Prostate gland (tissue), 2 donors: ENCODE measurements at regions of chr4 and their contacts with region 1.

Region 1: DNA sequence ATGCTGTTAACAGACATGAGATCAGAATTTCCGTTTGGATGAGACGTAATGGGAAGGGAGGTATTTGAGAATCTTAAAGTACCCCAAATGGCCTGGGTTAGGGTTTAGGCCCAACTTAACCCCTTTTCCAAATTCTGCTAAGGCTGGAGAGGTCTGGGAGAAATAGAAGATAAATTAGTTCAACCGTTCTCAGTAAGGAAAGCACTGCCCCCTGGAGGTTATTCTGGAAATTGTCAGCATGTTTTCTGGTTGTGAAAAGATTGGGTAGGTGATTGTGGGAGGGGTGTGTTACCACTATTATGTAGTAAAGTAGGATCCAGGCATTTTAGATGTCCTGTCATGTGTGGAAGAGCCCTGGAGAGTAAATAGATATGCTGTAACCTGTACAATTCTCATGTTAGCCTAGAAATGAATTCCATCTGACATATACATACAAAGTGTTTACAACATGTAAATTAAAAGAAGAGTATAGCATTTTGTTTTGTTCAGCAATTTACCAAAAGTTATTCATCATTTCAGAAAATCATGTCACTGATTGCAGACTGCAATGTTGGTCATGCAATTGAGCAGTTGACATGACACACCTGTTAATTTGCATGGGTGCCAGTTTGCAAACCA is 26.8 kb upstream of the GRXCR1 start:
- DNase-seq: peak; percentile 48
- H3K4me3 ChIP-seq: no peak overlapping the region
- H3K27ac ChIP-seq: no peak overlapping the region
- H3K4me1 ChIP-seq: no peaks in the 10 kb centered on the region
- H3K27me3 ChIP-seq: no peaks in the 10 kb centered on the region
- CTCF ChIP-seq: peak; percentile 52 to 82 (median 68)
- POLR2A ChIP-seq: no peak

Region 2: DNA sequence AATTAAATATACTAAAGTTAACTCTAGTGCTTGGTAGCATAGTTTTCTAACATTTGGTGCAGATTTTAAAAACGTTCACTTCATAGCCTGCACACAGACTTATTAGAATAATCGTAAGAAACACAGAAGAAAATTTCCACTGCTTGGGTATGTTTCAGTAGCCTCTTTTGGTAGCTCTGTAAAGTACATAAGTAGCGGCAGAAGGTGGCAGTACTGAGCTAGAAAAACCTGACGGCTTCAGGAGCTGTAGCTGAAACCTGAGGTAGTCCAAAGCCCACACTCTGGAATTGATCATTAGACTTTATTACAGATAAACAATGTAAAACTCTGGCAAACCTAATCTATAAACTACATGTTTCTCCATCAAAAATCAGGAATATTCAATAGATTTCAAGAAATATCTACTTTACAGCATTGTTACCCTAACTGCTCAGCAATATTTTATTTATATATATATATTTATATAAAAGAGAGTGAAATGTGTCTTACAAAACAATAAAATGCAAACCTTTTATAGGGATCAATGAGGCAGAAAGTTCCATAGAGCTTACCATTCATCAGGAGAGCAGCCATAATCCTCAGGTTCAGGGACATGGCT is 297.0 kb before region 1 on chr4:
- intact Hi-C with region 1: loop called (anchors 2 kb)
- DNase-seq: peak; percentile 72
- H3K4me3 ChIP-seq: no peak overlapping the region
- H3K27ac ChIP-seq: no peak overlapping the region
- H3K4me1 ChIP-seq: no peaks in the 10 kb centered on the region
- H3K27me3 ChIP-seq: no peaks in the 10 kb centered on the region
- CTCF ChIP-seq: peak in 3 of 4 experiments; percentile 61 to 71 (median 65)
- POLR2A ChIP-seq: no peak

Region 3: GRCh38 chr4:42720533-42720932 is 145.1 kb before region 1 on chr4:
- intact Hi-C with region 1: no loop called
- DNase-seq: no peak
- H3K4me3 ChIP-seq: no peak overlapping the region
- H3K27ac ChIP-seq: no peak overlapping the region
- H3K4me1 ChIP-seq: no peaks in the 10 kb centered on the region
- H3K27me3 ChIP-seq: no peaks in the 10 kb centered on the region
- CTCF ChIP-seq: no peak
- POLR2A ChIP-seq: no peak

Region 4: DNA sequence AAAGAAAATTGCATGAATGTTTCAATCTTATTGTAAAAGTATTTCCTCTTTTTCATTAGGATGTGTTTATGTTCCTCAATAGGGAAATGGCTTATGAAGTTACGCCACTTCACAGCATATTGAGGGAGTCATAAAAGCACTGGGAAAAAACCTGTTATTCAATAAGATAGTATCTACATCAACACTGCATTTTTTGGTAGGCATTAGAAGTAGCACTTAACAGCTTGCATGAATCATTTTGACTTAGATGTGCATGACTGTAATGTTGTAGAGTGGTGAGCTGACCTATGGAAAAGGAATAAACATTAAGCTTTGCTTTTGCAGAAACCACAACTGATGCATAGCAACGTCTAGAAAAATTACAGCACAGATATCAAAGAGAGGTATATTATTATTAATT is 84.4 kb before region 1 on chr4:
- intact Hi-C with region 1: no loop called
- DNase-seq: no peak
- H3K4me3 ChIP-seq: no peak overlapping the region
- H3K27ac ChIP-seq: no peak overlapping the region
- H3K4me1 ChIP-seq: no peaks in the 10 kb centered on the region
- H3K27me3 ChIP-seq: no peaks in the 10 kb centered on the region
- CTCF ChIP-seq: no peak
- POLR2A ChIP-seq: no peak